SK-N-SH (cell line): ENCODE measurements at regions of chr10 and their contacts with region 1.

Region 1: DNA sequence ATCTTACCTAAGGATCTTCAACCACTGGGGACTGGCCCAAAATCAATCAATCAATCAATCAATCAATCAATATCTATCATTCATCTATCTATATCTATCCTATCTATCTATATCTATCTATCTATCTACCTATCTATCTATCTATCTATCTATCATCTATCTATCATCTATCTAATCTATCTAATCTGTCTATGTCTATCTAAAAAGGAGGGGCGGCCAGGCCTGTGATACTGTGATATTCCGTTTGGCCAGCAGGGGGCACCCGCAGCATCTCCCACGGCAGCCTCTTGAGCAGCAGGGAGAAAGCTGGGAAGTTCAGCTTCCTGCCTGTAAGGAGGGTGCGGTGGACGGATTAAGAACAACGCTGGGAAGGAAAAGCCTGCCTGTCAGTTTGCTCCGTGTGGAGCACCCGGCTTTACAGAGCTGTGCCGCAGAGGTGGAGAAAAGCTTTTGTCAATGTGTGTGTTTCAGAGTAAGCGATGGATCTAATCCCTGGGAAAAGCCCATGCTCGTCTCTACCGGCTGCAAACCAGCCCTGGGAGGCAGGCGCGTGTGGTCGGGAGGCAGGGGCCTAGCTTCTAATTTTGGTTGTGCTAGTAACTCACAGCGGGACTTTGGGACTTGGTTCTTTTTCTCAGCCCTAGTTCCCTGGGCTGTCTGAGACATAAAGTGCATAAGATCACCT is 125.0 kb downstream of the SH2D4B start:
- DNase-seq: peak; percentile 77
- H3K4me3 ChIP-seq: peak overlapping the region; percentile 24 to 46; a peak in 3 of 4 replicates
- H3K27ac ChIP-seq: no peak overlapping the region
- H3K4me1 ChIP-seq: peaks cover 0 to 2% of the 10 kb centered on the region in 2 experiments; a peak in 1 of 4 replicates
- H3K27me3 ChIP-seq: no peaks in the 10 kb centered on the region
- CTCF ChIP-seq: peak; percentile 88
- EP300 ChIP-seq: no peak
- RAD21 ChIP-seq: peak; percentile 70

Region 2: GRCh38 chr10:80390740-80391139 is 272.0 kb before region 1 on chr10:
- CTCF ChIA-PET with region 1: no interaction called
- POLR2A ChIA-PET with region 1: no interaction called
- DNase-seq: no peak
- H3K4me3 ChIP-seq: no peak overlapping the region
- H3K27ac ChIP-seq: no peak overlapping the region
- H3K4me1 ChIP-seq: peaks cover 0 to 2% of the 10 kb centered on the region in 2 experiments; a peak in 1 of 4 replicates
- H3K27me3 ChIP-seq: no peaks in the 10 kb centered on the region
- CTCF ChIP-seq: no peak
- EP300 ChIP-seq: no peak
- RAD21 ChIP-seq: no peak

Region 3: DNA sequence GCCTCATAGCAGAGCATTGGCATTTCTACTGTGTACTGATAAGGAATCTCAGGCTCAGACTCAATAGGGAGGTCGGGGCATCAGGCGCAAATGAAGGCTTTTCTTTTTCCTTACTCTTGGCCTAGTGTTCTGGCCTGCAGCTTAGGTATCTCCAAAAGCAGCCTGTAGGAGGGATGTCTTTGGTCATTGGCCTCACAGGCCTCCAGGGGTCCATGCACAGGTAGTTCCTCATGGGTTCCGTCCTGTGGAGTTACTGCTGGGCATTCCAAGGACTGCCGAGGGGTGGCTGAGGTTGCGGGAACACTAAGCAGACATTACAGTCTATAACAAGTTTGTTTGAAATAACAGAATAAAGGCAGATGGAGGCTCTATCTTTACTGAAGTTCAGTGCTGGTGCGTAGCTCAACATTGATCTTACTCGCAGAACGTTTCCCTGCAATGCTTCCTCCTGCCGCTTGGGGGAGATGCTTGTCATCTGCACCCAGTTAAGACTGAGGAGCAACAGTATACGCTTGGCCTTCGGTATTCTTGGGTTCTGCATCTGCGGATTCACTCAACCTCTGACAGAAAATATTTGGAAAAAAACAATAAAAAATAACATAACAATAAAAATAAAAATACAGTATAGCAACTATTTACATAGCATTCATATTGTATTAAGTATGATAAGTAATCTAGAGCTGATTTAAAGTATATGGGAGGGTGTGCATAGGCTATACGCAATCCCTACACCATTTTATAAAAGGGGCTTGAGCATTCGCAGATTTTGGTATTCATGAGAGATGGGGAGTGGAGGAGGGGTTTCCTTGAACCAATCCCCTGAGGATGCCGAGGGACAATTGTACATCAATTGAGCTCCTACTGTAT is 66.1 kb before region 1 on chr10:
- CTCF ChIA-PET with region 1: interaction called, 29 read pairs
- POLR2A ChIA-PET with region 1: no interaction called
- DNase-seq: peak; percentile 58
- H3K4me3 ChIP-seq: peak overlapping the region in 1 of 2 experiments; percentile 32; a peak in 1 of 4 replicates
- H3K27ac ChIP-seq: no peak overlapping the region
- H3K4me1 ChIP-seq: peaks cover 0 to 5% of the 10 kb centered on the region in 2 experiments; a peak in 2 of 4 replicates
- H3K27me3 ChIP-seq: no peaks in the 10 kb centered on the region
- CTCF ChIP-seq: peak; percentile 66
- EP300 ChIP-seq: no peak
- RAD21 ChIP-seq: peak; percentile 49

Region 4: GRCh38 chr10:80642661-80643060 is 20.1 kb before region 1 on chr10:
- CTCF ChIA-PET with region 1: interaction called, 22 read pairs
- POLR2A ChIA-PET with region 1: no interaction called
- DNase-seq: no peak
- H3K4me3 ChIP-seq: no peak overlapping the region
- H3K27ac ChIP-seq: no peak overlapping the region
- H3K4me1 ChIP-seq: peaks cover 0 to 12% of the 10 kb centered on the region in 2 experiments; a peak in 2 of 4 replicates
- H3K27me3 ChIP-seq: no peaks in the 10 kb centered on the region
- CTCF ChIP-seq: no peak
- EP300 ChIP-seq: no peak
- RAD21 ChIP-seq: no peak

Region 5: GRCh38 chr10:80708185-80708584 is 45.5 kb after region 1 on chr10:
- CTCF ChIA-PET with region 1: interaction called, 78 read pairs
- POLR2A ChIA-PET with region 1: no interaction called
- DNase-seq: no peak
- H3K4me3 ChIP-seq: no peak overlapping the region
- H3K27ac ChIP-seq: no peak overlapping the region
- H3K4me1 ChIP-seq: peaks cover 0 to 4% of the 10 kb centered on the region in 2 experiments; a peak in 1 of 4 replicates
- H3K27me3 ChIP-seq: no peaks in the 10 kb centered on the region
- CTCF ChIP-seq: no peak
- EP300 ChIP-seq: no peak
- RAD21 ChIP-seq: no peak

Region 6: GRCh38 chr10:80805343-80806020 is 142.8 kb after region 1 on chr10:
- CTCF ChIA-PET with region 1: no interaction called
- POLR2A ChIA-PET with region 1: no interaction called
- DNase-seq: no peak
- H3K4me3 ChIP-seq: no peak overlapping the region
- H3K27ac ChIP-seq: no peak overlapping the region
- H3K4me1 ChIP-seq: no peaks in the 10 kb centered on the region
- H3K27me3 ChIP-seq: no peaks in the 10 kb centered on the region
- CTCF ChIP-seq: no peak
- EP300 ChIP-seq: no peak
- RAD21 ChIP-seq: no peak

Region 7: GRCh38 chr10:80945264-80945880 is 282.7 kb after region 1 on chr10:
- CTCF ChIA-PET with region 1: interaction called, 12 read pairs
- POLR2A ChIA-PET with region 1: no interaction called
- DNase-seq: peak; percentile 8
- H3K4me3 ChIP-seq: no peak overlapping the region
- H3K27ac ChIP-seq: no peak overlapping the region
- H3K4me1 ChIP-seq: no peaks in the 10 kb centered on the region
- H3K27me3 ChIP-seq: no peaks in the 10 kb centered on the region
- CTCF ChIP-seq: no peak
- EP300 ChIP-seq: no peak
- RAD21 ChIP-seq: peak; percentile 57